Dendritic cell treated with granulocyte-macrophage colony-stimulating factor and Interleukin-4, amounts not matched to agents 40 ng/mL and 50 ng/mL, for 4 days (primary cell): ENCODE measurements at regions of chr13 and their contacts with region 1.

Region 1: GRCh38 chr13:58960888-58961287 is 1202.8 kb downstream of the DIAPH3 start:
- H3K4me3 Mint-ChIP-seq: no peak overlapping the region
- H3K27ac Mint-ChIP-seq: no peak overlapping the region
- H3K4me1 Mint-ChIP-seq: no peaks in the 10 kb centered on the region
- H3K27me3 Mint-ChIP-seq: no peaks in the 10 kb centered on the region

Region 2: DNA sequence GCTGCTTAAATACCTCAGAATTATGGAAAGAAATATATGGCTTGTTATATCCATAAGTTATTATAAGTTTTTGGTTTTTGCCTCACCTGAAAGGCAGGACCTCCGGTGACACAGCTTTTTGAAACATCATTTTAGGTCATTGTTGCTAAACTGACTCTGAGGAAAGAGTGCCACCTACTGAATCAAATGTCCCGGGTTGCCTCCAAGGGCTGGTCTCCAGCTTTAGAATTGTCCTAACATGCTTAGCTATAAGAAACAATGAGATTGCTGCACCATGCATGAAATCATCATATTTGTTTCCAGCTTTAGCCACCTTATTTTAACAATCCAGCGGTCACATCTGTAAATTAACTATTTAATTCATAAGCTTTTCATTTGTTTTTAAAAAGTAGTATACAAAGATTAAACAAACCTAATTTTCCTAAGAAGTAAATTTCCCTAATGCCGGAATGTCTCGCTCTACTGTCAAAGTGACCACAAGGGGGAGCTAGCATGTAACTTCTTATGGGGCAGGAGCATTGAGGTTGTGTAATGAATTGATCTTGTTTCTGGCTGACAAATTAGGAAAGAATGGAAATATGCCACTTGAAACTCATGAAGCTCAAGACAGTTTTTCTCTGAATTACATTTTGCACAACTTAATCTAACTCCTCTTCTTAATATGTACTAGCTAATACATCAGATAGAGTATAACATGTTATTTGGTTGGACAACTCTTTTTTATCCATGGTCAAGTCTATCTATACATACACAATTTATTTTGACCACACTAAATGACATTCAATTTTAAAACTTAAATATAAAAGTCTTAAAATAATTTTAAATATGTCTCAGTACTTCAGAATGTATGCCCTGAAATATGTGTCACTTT is 1336.1 kb before region 1 on chr13:
- intact Hi-C with region 1: loop called (anchors 1 kb)
- H3K4me3 Mint-ChIP-seq: no peak overlapping the region
- H3K27ac Mint-ChIP-seq: no peak overlapping the region
- H3K4me1 Mint-ChIP-seq: peaks cover 6% of the 10 kb centered on the region
- H3K27me3 Mint-ChIP-seq: peaks cover 19% of the 10 kb centered on the region

Region 3: GRCh38 chr13:57918086-57918485 is 1042.8 kb before region 1 on chr13:
- intact Hi-C with region 1: loop called (anchors 10 kb)
- H3K4me3 Mint-ChIP-seq: no peak overlapping the region
- H3K27ac Mint-ChIP-seq: no peak overlapping the region
- H3K4me1 Mint-ChIP-seq: no peaks in the 10 kb centered on the region
- H3K27me3 Mint-ChIP-seq: no peaks in the 10 kb centered on the region

Region 4: GRCh38 chr13:58542530-58542929 is 418.4 kb before region 1 on chr13:
- intact Hi-C with region 1: loop called (anchors 10 kb)
- H3K4me3 Mint-ChIP-seq: no peak overlapping the region
- H3K27ac Mint-ChIP-seq: no peak overlapping the region
- H3K4me1 Mint-ChIP-seq: peaks cover 7% of the 10 kb centered on the region
- H3K27me3 Mint-ChIP-seq: peaks cover 2% of the 10 kb centered on the region